ENCODE measurements at regions of chr10 and their contacts with region 1.

Region 1: GRCh38 chr10:60099998-60100747 is 193.8 kb upstream of the CCDC6 start:
- DNase-seq: peak in 2 of 4 donors; percentile 51 to 69
- ATAC-seq: peak; percentile 90
- H3K4me3 ChIP-seq: no peak overlapping the region
- H3K27ac ChIP-seq: no peak overlapping the region
- H3K4me1 ChIP-seq: no peaks in the 10 kb centered on the region
- H3K27me3 ChIP-seq: no peaks in the 10 kb centered on the region
- CTCF ChIP-seq: peak; percentile 48 to 51

Region 2: DNA sequence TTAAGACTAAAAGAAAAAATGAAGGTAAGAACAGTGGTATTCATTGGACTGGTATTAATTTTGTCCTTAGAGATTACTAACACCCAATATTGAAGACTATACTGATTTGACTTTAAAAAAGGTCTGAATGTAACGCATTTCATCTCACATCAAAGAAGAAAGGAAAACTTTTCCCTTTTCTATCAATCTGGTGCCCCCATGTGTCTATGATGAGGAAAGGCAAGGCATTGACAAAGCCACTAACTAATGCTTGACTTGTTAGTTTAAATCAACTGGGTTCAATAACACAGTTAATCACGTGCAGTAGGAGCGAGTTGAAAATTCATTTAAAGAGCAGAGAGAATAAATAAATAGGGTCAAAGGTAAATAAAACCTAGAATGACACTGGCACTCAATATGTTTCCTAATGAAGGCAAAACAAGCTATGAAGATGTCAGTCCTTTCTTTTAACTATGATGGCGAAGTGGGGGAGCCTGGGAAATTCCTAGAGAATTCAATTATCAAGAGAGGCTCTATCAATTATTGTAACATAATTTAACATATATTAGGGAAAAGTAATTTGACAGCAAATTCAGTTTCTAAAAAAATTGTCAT is 108.6 kb after region 1 on chr10:
- intact Hi-C with region 1: loop called in 1 of 2 experiments (anchors 10 kb)
- DNase-seq: peak in 2 of 4 donors; percentile 16 to 35
- ATAC-seq: peak; percentile 42
- H3K4me3 ChIP-seq: no peak overlapping the region
- H3K27ac ChIP-seq: no peak overlapping the region
- H3K4me1 ChIP-seq: no peaks in the 10 kb centered on the region
- H3K27me3 ChIP-seq: no peaks in the 10 kb centered on the region
- CTCF ChIP-seq: peak; percentile 29 to 53

Measured in left lung (tissue), 14 donors.